ENCODE measurements at regions of chr7 and their contacts with region 1.

Region 1: DNA sequence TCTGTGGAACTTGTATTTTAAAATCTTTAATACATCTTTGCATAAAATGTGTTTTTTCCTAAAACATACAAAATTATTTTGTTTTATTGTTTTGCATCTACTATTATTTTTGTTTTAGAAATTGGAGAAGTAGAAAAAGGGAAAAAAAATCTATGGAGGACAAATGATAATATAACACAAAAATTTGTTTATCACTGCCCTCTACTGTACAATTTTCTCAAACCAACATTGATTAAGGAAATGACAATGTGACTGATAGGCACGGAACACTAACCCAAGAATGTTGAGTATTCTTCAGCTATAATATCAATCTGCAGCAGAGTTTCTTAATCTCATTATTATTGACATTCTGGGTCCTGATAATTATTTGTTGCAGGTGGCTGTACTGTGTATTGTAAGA is 9.5 kb upstream of the ING3 start:
- DNase-seq: no peak
- H3K4me3 ChIP-seq: no peak overlapping the region
- H3K27ac ChIP-seq: no peak overlapping the region
- H3K27me3 ChIP-seq: no peaks in the 10 kb centered on the region
- CTCF ChIP-seq: peak in 35 of 56 donors; percentile 8 to 66 (median 27)

Region 2: GRCh38 chr7:120792091-120792860 is 148.8 kb before region 1 on chr7:
- intact Hi-C with region 1: loop called in 1 of 2 experiments (anchors 5 kb)
- DNase-seq: peak; percentile 21 to 75 (median 56)
- H3K4me3 ChIP-seq: no peak overlapping the region
- H3K27ac ChIP-seq: no peak overlapping the region
- H3K27me3 ChIP-seq: no peaks in the 10 kb centered on the region
- CTCF ChIP-seq: peak; percentile 27 to 81 (median 68)